ENCODE measurements at regions of chr2 and their contacts with region 1.

Region 1: DNA sequence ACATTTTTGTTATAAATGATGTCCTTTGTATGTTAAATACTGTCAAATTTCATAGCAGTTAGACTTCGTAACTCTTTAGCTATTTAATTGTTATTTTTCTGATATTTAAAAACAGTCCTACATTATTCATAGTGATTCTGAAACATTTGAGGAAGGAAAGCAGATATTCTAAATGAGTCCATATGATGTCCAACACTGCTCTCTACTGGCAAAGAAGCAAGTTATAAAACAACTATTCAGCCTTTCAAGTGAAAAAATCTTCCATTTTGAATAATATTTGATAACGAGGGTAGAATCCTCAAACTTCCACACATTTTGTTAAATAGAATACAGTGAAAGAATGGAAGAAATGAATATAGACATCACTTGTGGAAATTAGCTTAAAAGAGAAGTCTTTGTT is 220.8 kb downstream of the GULP1 start:
- DNase-seq: no peak
- ATAC-seq: no peak
- H3K4me3 Mint-ChIP-seq: no peak overlapping the region
- H3K27ac Mint-ChIP-seq: no peak overlapping the region
- H3K4me1 Mint-ChIP-seq: no peaks in the 10 kb centered on the region
- H3K27me3 Mint-ChIP-seq: no peaks in the 10 kb centered on the region
- CTCF ChIP-seq: no peak

Region 2: DNA sequence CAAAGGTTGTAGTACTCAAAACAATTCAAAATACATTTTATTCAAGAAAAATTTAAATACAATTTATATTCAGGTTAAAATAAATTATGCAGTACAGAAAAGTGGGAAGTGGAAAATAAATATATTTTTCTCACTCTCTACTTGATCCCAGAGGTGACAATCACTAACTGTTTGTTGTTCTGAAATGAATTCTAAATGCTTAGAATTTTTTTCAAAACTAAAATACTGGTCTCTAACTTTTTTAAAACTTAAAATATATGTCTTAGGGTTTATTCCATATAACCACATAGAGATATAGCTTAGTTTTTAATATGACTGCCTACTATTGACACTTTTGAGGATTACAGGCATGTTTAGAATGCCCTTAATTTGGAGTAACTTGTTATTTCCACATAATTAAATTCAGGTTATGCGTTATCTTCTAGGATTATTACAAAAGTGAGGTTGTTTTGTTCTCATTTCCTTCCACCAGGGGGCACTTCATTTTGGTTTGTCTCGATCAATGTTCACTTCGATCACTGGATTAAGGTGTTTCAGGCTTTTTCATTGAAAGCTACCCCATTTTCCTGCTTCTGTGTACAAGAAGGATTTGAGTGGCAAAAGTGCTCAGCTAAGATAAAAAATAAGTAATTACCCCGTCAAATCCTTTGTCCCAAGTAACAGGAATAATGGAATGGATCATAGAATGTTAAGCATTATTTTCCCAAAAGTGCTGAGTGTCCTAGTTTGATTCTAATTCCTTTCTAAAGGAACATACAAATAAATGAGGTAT is 931.1 kb before region 1 on chr2:
- CTCF ChIA-PET with region 1: no interaction called
- POLR2A ChIA-PET with region 1: no interaction called
- intact Hi-C with region 1: loop called (anchors 2 kb)
- DNase-seq: no peak
- ATAC-seq: no peak
- H3K4me3 Mint-ChIP-seq: no peak overlapping the region
- H3K27ac Mint-ChIP-seq: no peak overlapping the region
- H3K4me1 Mint-ChIP-seq: no peaks in the 10 kb centered on the region
- H3K27me3 Mint-ChIP-seq: no peaks in the 10 kb centered on the region
- CTCF ChIP-seq: peak; percentile 46

Region 3: DNA sequence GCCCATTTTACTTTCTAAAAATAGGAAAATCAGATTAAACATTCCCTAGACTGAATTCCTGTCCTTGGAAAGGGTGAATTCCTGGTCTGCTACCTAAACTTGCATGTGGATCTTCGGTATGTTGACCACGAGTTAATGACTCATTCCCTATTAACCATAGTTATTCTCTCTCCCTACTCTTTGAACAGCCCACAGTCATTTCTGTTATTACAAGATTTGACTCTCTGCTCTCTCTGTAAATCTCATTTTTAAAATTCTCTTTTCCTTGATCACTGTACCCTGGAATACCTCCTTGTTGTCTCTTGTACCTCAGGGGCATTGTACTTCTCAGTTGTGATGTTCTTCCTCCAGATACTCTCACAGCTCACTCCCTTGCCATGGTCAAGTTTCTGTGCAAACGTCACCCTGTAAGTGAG is 312.7 kb before region 1 on chr2:
- CTCF ChIA-PET with region 1: no interaction called
- POLR2A ChIA-PET with region 1: no interaction called
- intact Hi-C with region 1: no loop called
- DNase-seq: no peak
- ATAC-seq: no peak
- H3K4me3 Mint-ChIP-seq: no peak overlapping the region
- H3K27ac Mint-ChIP-seq: no peak overlapping the region
- H3K4me1 Mint-ChIP-seq: no peaks in the 10 kb centered on the region
- H3K27me3 Mint-ChIP-seq: no peaks in the 10 kb centered on the region
- CTCF ChIP-seq: no peak

Region 4: DNA sequence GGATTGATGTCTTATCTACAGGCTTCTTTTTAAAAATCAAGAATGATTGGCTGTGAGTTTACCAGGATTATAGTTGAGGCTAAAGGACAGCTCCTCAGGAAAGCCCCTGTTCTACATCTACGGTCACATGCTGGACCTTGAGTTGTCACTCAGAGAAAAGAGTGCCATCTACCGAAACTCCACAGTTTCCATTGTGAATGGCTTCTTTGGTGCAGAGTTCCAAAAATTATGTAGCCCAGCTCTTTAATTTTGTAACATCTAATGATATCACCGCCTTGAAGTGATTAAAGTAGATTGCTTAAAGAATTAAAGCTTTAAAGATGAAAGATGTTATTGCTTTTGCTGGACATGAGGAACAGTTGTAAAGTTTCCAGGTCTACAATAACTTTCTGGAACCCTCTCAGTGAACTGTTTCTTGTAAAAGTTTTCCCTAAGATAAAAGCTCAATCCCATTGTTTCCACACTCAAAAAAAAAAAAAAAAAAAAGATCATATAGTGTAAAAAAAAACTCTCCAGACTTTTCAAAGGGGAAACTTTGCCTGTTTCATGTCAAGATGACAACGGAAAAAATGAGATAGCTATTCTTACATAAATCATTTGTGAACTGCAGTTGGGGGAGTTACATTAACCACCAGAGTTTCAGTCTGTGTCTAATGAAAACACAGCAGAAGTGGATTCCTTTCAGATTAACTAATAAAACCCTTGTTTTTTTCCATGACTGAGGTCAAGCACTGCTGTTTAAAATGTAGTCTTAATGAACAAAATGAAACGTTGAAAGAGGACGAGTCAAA is 466.0 kb after region 1 on chr2:
- CTCF ChIA-PET with region 1: no interaction called
- POLR2A ChIA-PET with region 1: no interaction called
- intact Hi-C with region 1: no loop called
- DNase-seq: no peak
- ATAC-seq: no peak
- H3K4me3 Mint-ChIP-seq: no peak overlapping the region
- H3K27ac Mint-ChIP-seq: no peak overlapping the region
- H3K4me1 Mint-ChIP-seq: no peaks in the 10 kb centered on the region
- H3K27me3 Mint-ChIP-seq: no peaks in the 10 kb centered on the region
- CTCF ChIP-seq: no peak